MCF 10A (cell line): ENCODE measurements at regions of chr6 and their contacts with region 1.

Region 1: DNA sequence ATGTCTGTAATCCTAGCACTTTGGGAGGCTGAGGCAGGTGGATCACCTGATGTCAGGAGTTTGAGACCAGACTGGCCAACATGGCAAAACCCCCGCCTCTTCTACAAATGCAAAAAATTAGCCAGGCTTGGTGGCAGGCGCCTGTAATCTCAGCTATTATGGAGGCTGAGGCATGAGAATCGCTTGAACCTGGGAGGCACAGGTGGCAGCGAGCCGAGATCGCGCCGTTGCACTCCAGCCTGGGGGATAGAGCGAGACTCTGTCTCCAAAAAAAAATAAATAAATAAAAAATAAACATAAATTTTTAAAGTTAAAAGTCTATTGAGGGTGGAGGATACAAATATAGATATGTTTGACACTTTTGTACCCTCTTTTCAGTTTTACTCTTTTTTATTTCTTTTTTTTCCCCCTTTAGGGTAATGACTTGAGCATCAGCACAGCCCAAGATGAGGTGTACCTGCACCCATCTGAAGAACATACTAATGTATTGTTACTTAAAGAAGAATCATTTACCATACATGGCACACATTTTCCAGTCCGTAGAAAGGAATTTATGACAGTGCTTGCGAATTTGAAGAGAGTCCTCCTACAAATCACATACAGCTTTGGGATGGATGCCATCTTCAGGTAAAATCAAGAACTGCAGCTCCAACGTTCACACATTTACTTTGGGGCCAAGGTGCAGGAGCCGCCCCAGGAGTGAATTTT is 368.9 kb downstream of the LAMA2 start:
- DNase-seq: peak; percentile 77
- H3K4me3 Mint-ChIP-seq: no peak overlapping the region
- H3K27ac Mint-ChIP-seq: no peak overlapping the region
- H3K4me1 Mint-ChIP-seq: no peaks in the 10 kb centered on the region
- H3K27me3 Mint-ChIP-seq: peaks cover 67% of the 10 kb centered on the region
- CTCF ChIP-seq: peak; percentile 88

Region 2: GRCh38 chr6:127737009-127737486 is 1514.8 kb before region 1 on chr6:
- CTCF ChIA-PET with region 1: interaction called, 4 read pairs
- POLR2A ChIA-PET with region 1: no interaction called
- intact Hi-C with region 1: loop called (anchors 5 kb)
- DNase-seq: peak; percentile 77
- H3K4me3 Mint-ChIP-seq: no peak overlapping the region
- H3K27ac Mint-ChIP-seq: no peak overlapping the region
- H3K4me1 Mint-ChIP-seq: no peaks in the 10 kb centered on the region
- H3K27me3 Mint-ChIP-seq: peaks cover 14% of the 10 kb centered on the region
- CTCF ChIP-seq: peak; percentile 70

Region 3: DNA sequence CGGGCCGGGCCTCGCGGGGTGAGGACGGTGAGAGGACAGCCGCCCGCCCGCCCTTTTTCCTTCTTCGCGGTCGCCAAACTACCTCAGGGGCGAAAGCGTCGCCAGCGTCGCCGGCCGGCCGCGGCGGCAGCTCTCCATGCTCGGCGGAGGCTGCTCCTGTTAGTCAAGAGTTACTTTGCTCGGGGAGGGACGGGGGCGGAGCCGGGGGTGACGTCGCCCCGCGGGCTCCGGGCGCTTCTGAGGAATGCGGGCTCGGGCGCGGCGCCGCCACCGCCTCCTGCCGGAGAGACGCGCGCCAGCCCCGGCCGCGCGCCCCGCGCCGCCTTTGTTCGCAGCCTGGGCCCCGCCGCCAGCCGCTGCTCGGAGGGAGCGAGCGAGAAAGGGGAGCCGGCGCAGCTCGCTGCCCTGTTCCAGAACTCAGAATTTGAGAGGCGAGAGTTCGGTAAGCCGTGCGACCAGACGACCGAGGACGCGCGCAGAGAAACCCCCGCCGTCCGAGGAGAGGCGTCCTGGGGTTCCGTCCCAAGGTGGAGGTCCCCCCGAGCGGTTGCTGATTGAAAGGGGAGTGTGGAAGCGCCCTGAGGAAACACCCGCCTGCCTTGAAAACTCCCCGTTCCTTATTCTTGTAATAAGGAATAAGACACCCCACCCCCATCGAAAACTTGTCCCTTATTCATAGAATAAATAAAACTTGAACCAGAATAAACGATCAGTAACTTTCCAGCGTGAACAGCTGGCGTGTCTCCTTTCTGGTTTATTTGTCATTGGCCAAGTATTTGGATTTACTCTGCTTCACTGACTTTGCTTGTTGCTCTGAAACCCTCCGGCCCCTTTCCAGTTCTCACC is 731.2 kb before region 1 on chr6 and contains the start of gene PTPRK:
- CTCF ChIA-PET with region 1: no interaction called
- POLR2A ChIA-PET with region 1: interaction called, 3 read pairs
- intact Hi-C with region 1: loop called (anchors 5 kb)
- DNase-seq: peak; percentile 93
- H3K4me3 Mint-ChIP-seq: peak within 1 kb of the TSS; percentile 97
- H3K27ac Mint-ChIP-seq: peak within 1 kb of the TSS; percentile 97
- H3K4me1 Mint-ChIP-seq: peaks cover 15% of the 10 kb centered on the region
- H3K27me3 Mint-ChIP-seq: no peaks in the 10 kb centered on the region
- CTCF ChIP-seq: peak; percentile 72
- total RNA-seq, gene PTPRK: 50.2 and 55.5 TPM in 2 replicates

Region 4: GRCh38 chr6:128807577-128807976 is 444.2 kb before region 1 on chr6:
- CTCF ChIA-PET with region 1: interaction called, 52 read pairs
- POLR2A ChIA-PET with region 1: interaction called, 8 read pairs
- intact Hi-C with region 1: loop called (anchors 1 kb)
- DNase-seq: peak; percentile 37
- H3K4me3 Mint-ChIP-seq: no peak overlapping the region
- H3K27ac Mint-ChIP-seq: no peak overlapping the region
- H3K4me1 Mint-ChIP-seq: no peaks in the 10 kb centered on the region
- H3K27me3 Mint-ChIP-seq: peaks cover 54% of the 10 kb centered on the region
- CTCF ChIP-seq: peak; percentile 49

Region 5: DNA sequence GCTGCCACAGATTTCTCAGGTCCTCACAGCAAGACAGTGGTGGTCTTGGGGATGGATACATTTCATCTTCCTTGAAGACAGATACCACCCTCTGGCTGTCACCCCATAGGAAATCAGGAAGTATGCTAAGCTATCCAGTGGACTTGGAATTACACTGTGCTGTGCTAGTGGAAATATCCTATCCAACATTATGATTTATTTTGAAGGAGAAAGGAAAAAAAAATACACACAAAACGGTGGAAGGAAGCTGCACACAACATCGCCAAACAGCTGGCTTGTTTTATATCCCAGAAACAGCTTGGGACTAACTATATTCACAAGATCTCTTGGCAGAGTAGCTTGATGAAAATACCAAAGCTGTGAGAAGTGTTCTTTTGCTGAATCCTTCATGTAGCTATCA is 111.3 kb before region 1 on chr6:
- CTCF ChIA-PET with region 1: no interaction called
- POLR2A ChIA-PET with region 1: no interaction called
- intact Hi-C with region 1: no loop called
- DNase-seq: no peak
- H3K4me3 Mint-ChIP-seq: no peak overlapping the region
- H3K27ac Mint-ChIP-seq: no peak overlapping the region
- H3K4me1 Mint-ChIP-seq: peaks cover 6% of the 10 kb centered on the region
- H3K27me3 Mint-ChIP-seq: peaks cover 81% of the 10 kb centered on the region
- CTCF ChIP-seq: no peak

Region 6: DNA sequence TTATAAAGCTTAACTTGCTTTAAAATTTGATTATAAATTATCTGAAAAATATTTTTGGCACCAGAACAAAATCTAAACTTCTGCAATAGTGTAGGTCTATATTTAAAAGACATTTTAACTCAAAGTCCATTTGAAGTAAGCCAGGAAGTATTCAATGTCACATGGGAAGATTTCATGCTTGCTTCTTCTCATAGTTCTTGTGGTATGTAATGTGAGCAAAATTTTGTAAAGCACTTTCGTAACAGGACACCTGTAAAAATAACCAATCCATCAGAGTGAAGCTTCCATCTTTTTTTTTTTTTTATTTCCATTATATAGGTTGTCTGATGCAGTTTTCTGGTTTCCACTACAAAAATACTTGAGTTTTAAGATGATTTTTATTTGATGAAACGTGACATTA is 17.3 kb after region 1 on chr6:
- CTCF ChIA-PET with region 1: interaction called, 11 read pairs
- POLR2A ChIA-PET with region 1: no interaction called
- intact Hi-C with region 1: no loop called
- DNase-seq: no peak
- H3K4me3 Mint-ChIP-seq: no peak overlapping the region
- H3K27ac Mint-ChIP-seq: no peak overlapping the region
- H3K4me1 Mint-ChIP-seq: no peaks in the 10 kb centered on the region
- H3K27me3 Mint-ChIP-seq: no peaks in the 10 kb centered on the region
- CTCF ChIP-seq: no peak

Region 7: DNA sequence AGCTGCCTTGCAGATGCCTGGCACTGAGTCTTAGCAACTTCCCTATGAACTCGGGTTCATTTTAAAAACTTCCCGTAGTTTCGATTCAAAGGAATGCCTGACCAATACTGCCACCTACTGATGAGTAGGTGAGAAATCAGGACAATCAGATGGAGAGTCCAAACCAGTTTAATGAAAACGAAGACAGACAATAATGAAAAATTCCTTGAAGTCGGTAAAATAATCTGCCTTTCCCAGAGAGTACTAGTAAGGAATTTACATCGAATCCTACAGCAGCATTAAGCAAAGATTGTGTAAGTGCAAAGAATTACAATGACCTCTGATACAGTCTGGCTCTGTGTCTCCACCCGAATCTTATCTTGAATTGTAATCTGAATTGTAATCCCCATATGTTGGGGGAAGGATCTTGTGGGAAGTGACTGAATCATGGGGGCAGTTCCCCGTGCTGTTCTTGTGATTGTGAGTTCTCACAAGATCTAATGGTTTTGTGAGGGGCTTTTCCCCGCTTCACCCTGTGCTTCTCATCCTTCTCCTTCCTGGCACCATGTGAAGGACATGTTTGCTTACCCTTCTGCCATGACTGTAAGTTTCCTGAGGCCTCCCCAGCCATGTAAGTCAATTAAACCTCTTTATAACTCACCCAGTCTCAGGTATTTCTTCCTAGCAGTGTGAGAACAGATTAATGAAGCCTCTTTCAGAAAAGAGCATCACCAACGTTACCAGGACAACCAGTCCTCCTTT is 323.7 kb after region 1 on chr6:
- CTCF ChIA-PET with region 1: no interaction called
- POLR2A ChIA-PET with region 1: no interaction called
- intact Hi-C with region 1: loop called (anchors 10 kb)
- DNase-seq: peak; percentile 68
- H3K4me3 Mint-ChIP-seq: no peak overlapping the region
- H3K27ac Mint-ChIP-seq: peak overlapping the region; percentile 36
- H3K4me1 Mint-ChIP-seq: no peaks in the 10 kb centered on the region
- H3K27me3 Mint-ChIP-seq: no peaks in the 10 kb centered on the region
- CTCF ChIP-seq: peak; percentile 77